Aorta (tissue), 5 donors: ENCODE measurements at regions of chr16 and their contacts with region 1.

Region 1: GRCh38 chr16:17404941-17405689 is 65.6 kb downstream of the XYLT1 start:
- DNase-seq: peak; percentile 90 to 92
- ATAC-seq: peak; percentile 91
- H3K4me3 ChIP-seq: no peak overlapping the region
- H3K27ac ChIP-seq: peak overlapping the region in 1 of 2 donors; percentile 92
- H3K4me1 ChIP-seq: no peaks in the 10 kb centered on the region
- H3K27me3 ChIP-seq: no peaks in the 10 kb centered on the region

Region 2: DNA sequence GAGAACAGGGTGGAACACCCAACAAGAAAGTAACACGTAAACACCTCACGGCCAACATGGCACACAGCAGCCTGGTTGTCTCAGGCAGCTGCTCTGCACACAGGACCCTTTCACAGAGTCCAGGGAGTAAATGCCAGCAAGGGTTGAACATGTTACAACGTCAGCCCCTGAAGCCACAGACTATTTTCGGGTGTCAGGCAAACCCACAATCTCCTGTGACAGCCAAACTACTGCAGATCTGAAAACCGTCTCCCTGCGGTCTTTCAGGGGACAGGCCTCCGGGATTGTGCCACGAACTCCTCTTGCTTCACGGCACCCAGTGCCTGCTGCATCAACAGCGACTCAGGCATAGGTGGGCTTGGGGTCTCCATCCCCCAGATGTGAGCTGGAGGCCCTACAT is 62.1 kb before region 1 on chr16:
- intact Hi-C with region 1: loop called in 1 of 2 experiments (anchors 2 kb)
- DNase-seq: no peak
- ATAC-seq: no peak
- H3K4me3 ChIP-seq: no peak overlapping the region
- H3K27ac ChIP-seq: no peak overlapping the region
- H3K4me1 ChIP-seq: no peaks in the 10 kb centered on the region
- H3K27me3 ChIP-seq: no peaks in the 10 kb centered on the region

Region 3: GRCh38 chr16:17571499-17572093 is 166.5 kb after region 1 on chr16:
- intact Hi-C with region 1: no loop called
- DNase-seq: no peak
- ATAC-seq: no peak
- H3K4me3 ChIP-seq: no peak overlapping the region
- H3K27ac ChIP-seq: no peak overlapping the region
- H3K4me1 ChIP-seq: no peaks in the 10 kb centered on the region
- H3K27me3 ChIP-seq: peaks cover 0 to 1% of the 10 kb centered on the region in 2 donors